WTC11 (cell line): ENCODE measurements at regions of chr15 and their contacts with region 1.

Region 1: DNA sequence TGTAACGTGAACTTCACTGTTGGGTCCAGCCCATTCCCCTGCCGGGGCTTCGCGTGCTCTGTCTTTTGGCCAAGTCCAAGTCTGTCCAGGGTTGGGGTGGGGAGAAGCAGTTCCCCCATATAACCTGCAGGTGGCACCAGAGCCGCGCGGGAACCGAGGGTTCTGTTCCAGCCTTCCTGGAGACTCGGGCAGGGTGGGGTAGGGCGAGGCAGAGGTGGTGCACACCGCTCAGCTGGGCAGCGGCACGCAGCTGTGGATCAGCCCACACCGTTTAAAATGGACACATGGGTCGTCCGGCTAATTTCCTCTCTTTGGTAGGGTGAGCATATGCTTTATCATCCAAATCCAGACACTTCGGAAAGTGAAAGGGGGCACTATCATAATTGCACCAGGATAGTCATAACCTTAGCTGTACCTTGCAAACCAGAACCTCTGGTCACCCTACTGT is 118.1 kb downstream of the TBC1D2B start:
- DNase-seq: peak; percentile 95
- ATAC-seq: peak; percentile 99
- H3K4me3 Mint-ChIP-seq: no peak overlapping the region
- H3K27ac Mint-ChIP-seq: no peak overlapping the region
- H3K4me1 Mint-ChIP-seq: peaks cover 14% of the 10 kb centered on the region
- H3K27me3 Mint-ChIP-seq: peaks cover 35% of the 10 kb centered on the region
- CTCF ChIP-seq: peak; percentile 90

Region 2: GRCh38 chr15:77738441-77739302 is 220.8 kb before region 1 on chr15:
- CTCF ChIA-PET with region 1: no interaction called
- POLR2A ChIA-PET with region 1: no interaction called
- DNase-seq: peak; percentile 40
- ATAC-seq: peak; percentile 10
- H3K4me3 Mint-ChIP-seq: peak overlapping the region; percentile 52
- H3K27ac Mint-ChIP-seq: no peak overlapping the region
- H3K4me1 Mint-ChIP-seq: peaks cover 46% of the 10 kb centered on the region
- H3K27me3 Mint-ChIP-seq: no peaks in the 10 kb centered on the region; the same call in 1 of the 2 replicates
- CTCF ChIP-seq: no peak

Region 3: GRCh38 chr15:77907824-77908751 is 51.4 kb before region 1 on chr15:
- CTCF ChIA-PET with region 1: interaction called, 20 read pairs
- POLR2A ChIA-PET with region 1: no interaction called
- DNase-seq: peak; percentile 85
- ATAC-seq: peak; percentile 88
- H3K4me3 Mint-ChIP-seq: no peak overlapping the region
- H3K27ac Mint-ChIP-seq: no peak overlapping the region
- H3K4me1 Mint-ChIP-seq: peaks cover 17% of the 10 kb centered on the region
- H3K27me3 Mint-ChIP-seq: peaks cover 3% of the 10 kb centered on the region; the same call in 1 of the 2 replicates
- CTCF ChIP-seq: 0 out of 2 replicates have a peak, but pooled peaks have one; percentile 36

Region 4: GRCh38 chr15:77939851-77940250 is 19.6 kb before region 1 on chr15:
- CTCF ChIA-PET with region 1: no interaction called
- POLR2A ChIA-PET with region 1: no interaction called
- DNase-seq: no peak
- ATAC-seq: no peak
- H3K4me3 Mint-ChIP-seq: no peak overlapping the region
- H3K27ac Mint-ChIP-seq: no peak overlapping the region
- H3K4me1 Mint-ChIP-seq: peaks cover 14% of the 10 kb centered on the region
- H3K27me3 Mint-ChIP-seq: peaks cover 11% of the 10 kb centered on the region
- CTCF ChIP-seq: no peak

Region 5: GRCh38 chr15:77983708-77984445 is 24.4 kb after region 1 on chr15:
- CTCF ChIA-PET with region 1: interaction called, 10 read pairs
- POLR2A ChIA-PET with region 1: no interaction called
- DNase-seq: no peak
- ATAC-seq: peak; percentile 56
- H3K4me3 Mint-ChIP-seq: no peak overlapping the region
- H3K27ac Mint-ChIP-seq: no peak overlapping the region
- H3K4me1 Mint-ChIP-seq: peaks cover 14% of the 10 kb centered on the region
- H3K27me3 Mint-ChIP-seq: no peaks in the 10 kb centered on the region
- CTCF ChIP-seq: no peak

Region 6: GRCh38 chr15:77992356-77993222 is 33.1 kb after region 1 on chr15:
- CTCF ChIA-PET with region 1: interaction called, 11 read pairs
- POLR2A ChIA-PET with region 1: no interaction called
- DNase-seq: no peak
- ATAC-seq: no peak
- H3K4me3 Mint-ChIP-seq: no peak overlapping the region
- H3K27ac Mint-ChIP-seq: no peak overlapping the region
- H3K4me1 Mint-ChIP-seq: peaks cover 7% of the 10 kb centered on the region
- H3K27me3 Mint-ChIP-seq: no peaks in the 10 kb centered on the region
- CTCF ChIP-seq: no peak

Region 7: DNA sequence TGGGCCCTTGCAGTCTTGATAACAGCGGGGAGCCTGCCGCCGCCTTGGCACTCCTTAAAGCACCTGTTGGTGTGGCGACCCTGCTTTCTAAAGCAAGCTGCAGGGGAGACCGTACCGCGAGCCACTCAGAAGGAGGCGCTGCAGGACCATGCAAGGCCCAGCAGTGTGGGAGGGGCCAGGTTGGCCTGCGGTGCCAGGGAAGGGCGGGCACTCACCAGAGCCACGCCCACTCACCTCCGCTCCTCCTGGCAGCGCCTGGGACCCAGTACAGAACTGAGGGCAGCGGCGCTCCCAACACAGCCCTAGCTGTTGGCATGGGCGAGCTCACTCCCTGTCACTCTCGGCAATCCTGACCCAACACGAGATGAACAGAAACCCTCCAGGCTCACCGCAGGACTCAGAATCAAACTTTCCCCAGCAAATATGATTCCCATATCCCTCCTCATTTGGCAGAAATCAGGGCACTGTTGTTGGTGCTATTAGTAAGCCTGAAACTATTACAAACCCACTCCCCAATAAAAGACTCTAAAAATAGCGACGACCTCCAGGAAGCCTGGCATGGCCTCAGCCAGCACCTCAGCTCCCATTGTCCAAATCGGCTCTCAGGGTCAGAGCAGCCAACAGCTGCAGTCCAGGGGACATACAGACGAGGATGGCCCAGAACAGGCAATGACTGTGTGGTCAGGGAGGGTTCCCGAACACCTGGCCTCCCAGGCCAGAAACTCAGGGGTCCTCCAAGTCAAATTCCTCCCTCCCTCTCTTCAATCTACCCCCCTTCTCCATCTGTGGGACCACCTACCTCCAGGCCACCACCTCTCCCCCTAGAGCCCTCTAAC is 40.9 kb after region 1 on chr15:
- CTCF ChIA-PET with region 1: interaction called, 14 read pairs
- POLR2A ChIA-PET with region 1: no interaction called
- DNase-seq: peak; percentile 97
- ATAC-seq: peak; percentile 99
- H3K4me3 Mint-ChIP-seq: no peak overlapping the region
- H3K27ac Mint-ChIP-seq: no peak overlapping the region; the same call in 1 of the 2 replicates
- H3K4me1 Mint-ChIP-seq: peaks cover 16% of the 10 kb centered on the region
- H3K27me3 Mint-ChIP-seq: no peaks in the 10 kb centered on the region
- CTCF ChIP-seq: peak; percentile 57

Region 8: DNA sequence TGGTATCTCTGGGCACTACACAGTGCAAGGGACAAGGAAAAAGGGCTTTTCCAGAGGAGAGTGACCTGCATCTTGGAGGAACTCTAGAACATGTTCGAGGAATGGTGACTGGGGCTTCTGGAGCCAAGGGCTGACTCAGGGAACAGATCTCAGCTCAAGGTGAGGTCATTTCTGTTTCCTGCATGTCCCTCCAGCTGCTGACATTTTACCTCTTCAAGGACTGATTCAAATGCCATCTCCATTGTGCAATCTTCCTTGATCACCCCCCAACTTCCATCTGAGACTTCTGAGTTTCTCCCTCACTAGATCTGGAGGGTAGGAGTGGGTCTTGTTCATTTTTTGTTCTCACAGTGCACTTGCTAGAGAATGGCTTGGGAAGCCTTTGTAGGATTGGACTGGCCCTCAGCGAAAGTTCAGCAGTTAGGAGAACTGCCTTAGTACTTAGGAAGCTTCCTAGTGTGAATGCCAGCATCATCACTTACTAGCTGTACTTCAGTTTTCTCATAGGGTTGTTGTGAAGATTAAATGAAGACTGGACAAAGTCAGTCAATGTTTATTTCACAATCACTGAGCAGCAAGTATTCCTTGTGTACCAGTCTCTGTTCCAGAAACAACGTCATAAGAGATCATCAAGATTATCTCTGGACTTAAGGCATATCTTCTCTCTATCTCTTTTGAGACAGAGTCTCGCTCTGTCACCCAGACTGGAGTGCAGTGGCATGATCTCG is 187.1 kb after region 1 on chr15:
- CTCF ChIA-PET with region 1: no interaction called
- POLR2A ChIA-PET with region 1: no interaction called
- DNase-seq: no peak
- ATAC-seq: no peak
- H3K4me3 Mint-ChIP-seq: no peak overlapping the region; the same call in 1 of the 2 replicates
- H3K27ac Mint-ChIP-seq: no peak overlapping the region
- H3K4me1 Mint-ChIP-seq: peaks cover 23% of the 10 kb centered on the region
- H3K27me3 Mint-ChIP-seq: peaks cover 4% of the 10 kb centered on the region; the same call in 1 of the 2 replicates
- CTCF ChIP-seq: no peak

Region 9: DNA sequence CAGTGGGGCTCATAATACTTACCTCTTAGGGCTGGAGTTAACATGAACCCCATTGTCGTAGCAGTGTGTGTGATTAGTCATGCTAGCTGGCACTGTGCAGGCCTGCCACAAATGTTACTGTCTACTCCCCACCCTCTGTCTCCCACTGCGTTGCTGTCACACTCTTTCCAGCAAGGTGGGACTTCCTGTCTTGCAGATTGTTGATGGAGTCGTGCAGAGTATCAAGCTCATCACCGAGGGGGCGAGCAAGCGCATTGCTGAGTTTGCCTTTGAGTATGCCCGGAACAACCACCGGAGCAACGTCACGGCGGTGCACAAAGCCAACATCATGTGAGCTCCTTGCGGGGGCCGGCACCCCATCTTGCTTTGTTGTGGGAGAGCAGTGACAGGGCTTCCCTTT is 202.6 kb after region 1 on chr15:
- CTCF ChIA-PET with region 1: no interaction called
- POLR2A ChIA-PET with region 1: no interaction called
- DNase-seq: no peak
- ATAC-seq: no peak
- H3K4me3 Mint-ChIP-seq: no peak overlapping the region
- H3K27ac Mint-ChIP-seq: no peak overlapping the region
- H3K4me1 Mint-ChIP-seq: peaks cover 11% of the 10 kb centered on the region
- H3K27me3 Mint-ChIP-seq: no peaks in the 10 kb centered on the region
- CTCF ChIP-seq: no peak